CD4-positive, alpha-beta T cell (primary cell): ENCODE measurements at regions of chr4 and their contacts with region 1.

Region 1: DNA sequence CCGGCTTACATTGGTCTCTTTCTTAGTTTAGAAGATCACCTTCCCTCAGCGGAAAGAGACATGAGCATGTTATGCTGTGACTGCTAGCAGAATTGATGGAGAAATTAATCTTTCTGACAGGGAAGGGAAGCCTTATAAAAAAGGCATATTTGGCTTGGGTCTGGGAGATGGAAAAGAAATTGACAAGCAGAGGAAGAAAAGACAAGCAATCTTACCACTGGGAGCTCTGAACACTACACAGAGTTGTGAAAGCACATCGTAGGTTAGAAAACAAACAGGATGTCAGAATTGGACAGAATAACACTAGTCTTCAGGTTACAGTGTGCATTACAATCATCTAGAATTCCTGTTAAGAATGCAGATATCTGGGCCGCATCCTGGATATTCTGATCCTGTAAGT is 1493.8 kb upstream of the IGFBP7 start:
- DNase-seq: no peak
- ATAC-seq: no peak
- H3K4me3 ChIP-seq: no peak overlapping the region
- H3K4me3 Mint-ChIP-seq: no peak overlapping the region
- H3K27ac ChIP-seq: no peak overlapping the region
- H3K27ac Mint-ChIP-seq: no peak overlapping the region
- H3K4me1 ChIP-seq: no peaks in the 10 kb centered on the region
- H3K4me1 Mint-ChIP-seq: no peaks in the 10 kb centered on the region
- H3K27me3 ChIP-seq: no peaks in the 10 kb centered on the region
- H3K27me3 Mint-ChIP-seq: no peaks in the 10 kb centered on the region
- CTCF ChIP-seq: no peak

Region 2: DNA sequence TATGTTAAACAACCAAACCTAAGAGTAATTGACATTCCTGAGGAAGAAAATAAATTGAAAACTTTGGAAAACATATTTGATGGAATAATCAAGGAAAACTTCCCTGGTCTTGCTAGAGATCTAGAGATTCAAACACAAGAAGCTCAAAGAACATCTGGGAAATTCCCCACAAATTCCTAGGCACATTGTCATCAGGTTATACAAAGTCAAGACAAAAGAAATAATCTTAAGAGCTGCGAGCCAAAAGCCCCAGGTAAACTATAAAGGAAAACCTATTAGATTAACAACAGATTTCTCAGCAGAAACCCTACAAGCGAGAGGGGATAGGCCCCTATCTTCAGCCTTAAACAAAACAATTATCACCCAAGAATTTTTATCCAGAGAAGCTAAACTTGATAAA is 411.7 kb before region 1 on chr4:
- CTCF ChIA-PET with region 1: no interaction called
- POLR2A ChIA-PET with region 1: no interaction called
- intact Hi-C with region 1: no loop called
- DNase-seq: no peak
- ATAC-seq: no peak
- H3K4me3 ChIP-seq: no peak overlapping the region
- H3K4me3 Mint-ChIP-seq: no peak overlapping the region
- H3K27ac ChIP-seq: no peak overlapping the region
- H3K27ac Mint-ChIP-seq: no peak overlapping the region
- H3K4me1 ChIP-seq: no peaks in the 10 kb centered on the region
- H3K4me1 Mint-ChIP-seq: no peaks in the 10 kb centered on the region
- H3K27me3 ChIP-seq: no peaks in the 10 kb centered on the region
- H3K27me3 Mint-ChIP-seq: no peaks in the 10 kb centered on the region
- CTCF ChIP-seq: no peak

Region 3: GRCh38 chr4:58587856-58588255 is 16.1 kb before region 1 on chr4:
- CTCF ChIA-PET with region 1: no interaction called
- POLR2A ChIA-PET with region 1: no interaction called
- intact Hi-C with region 1: no loop called
- DNase-seq: no peak
- ATAC-seq: no peak
- H3K4me3 ChIP-seq: no peak overlapping the region
- H3K4me3 Mint-ChIP-seq: no peak overlapping the region
- H3K27ac ChIP-seq: no peak overlapping the region
- H3K27ac Mint-ChIP-seq: no peak overlapping the region
- H3K4me1 ChIP-seq: no peaks in the 10 kb centered on the region
- H3K4me1 Mint-ChIP-seq: no peaks in the 10 kb centered on the region
- H3K27me3 ChIP-seq: no peaks in the 10 kb centered on the region
- H3K27me3 Mint-ChIP-seq: no peaks in the 10 kb centered on the region
- CTCF ChIP-seq: no peak

Region 4: DNA sequence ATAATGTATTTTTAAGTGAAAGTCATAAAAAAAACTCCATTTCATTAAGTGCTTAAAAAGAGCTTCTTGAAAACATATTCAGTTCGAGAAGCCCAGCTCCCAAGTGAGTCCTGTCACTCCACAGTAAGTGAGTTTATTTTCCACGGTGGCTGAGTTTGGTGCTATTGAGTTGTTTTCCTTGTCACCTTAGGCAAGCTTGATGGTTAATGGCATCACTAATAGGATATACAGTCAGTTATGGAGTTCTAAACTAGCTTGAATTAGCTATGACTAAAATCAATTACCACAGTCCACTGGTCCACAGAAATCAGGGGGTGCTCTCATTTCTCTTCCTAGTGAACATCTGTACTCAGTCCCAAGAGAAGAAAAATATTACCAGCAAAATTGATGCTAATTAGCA is 32.4 kb after region 1 on chr4:
- CTCF ChIA-PET with region 1: no interaction called
- POLR2A ChIA-PET with region 1: no interaction called
- intact Hi-C with region 1: loop called in 1 of 2 experiments (anchors 1 kb)
- DNase-seq: no peak
- ATAC-seq: no peak
- H3K4me3 ChIP-seq: no peak overlapping the region
- H3K4me3 Mint-ChIP-seq: no peak overlapping the region
- H3K27ac ChIP-seq: no peak overlapping the region
- H3K27ac Mint-ChIP-seq: no peak overlapping the region
- H3K4me1 ChIP-seq: no peaks in the 10 kb centered on the region
- H3K4me1 Mint-ChIP-seq: no peaks in the 10 kb centered on the region
- H3K27me3 ChIP-seq: no peaks in the 10 kb centered on the region
- H3K27me3 Mint-ChIP-seq: no peaks in the 10 kb centered on the region
- CTCF ChIP-seq: no peak